Mammary epithelial cell (primary cell): ENCODE measurements at regions of chr15 and their contacts with region 1.

Region 1: DNA sequence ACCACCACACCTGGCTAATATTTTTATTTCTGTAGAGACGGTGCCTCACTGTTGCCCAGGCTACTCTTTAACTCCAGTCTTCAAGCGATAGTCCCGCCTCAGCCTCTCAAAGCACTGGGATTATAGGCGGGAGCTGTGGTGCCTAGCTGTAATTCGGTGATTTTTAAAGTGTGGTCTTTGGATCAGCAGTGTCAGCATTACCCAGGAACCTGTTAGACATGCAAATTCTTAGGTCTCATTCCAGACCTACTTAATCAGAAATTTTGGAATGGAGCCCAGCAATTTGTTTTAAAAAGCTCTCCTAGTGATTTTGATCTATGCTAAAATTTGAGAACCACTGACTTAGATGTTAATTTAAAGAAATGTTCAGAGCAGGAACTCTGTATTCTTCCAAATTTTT is 51.9 kb downstream of the GOLM2 start:
- DNase-seq: peak; percentile 86
- H3K4me3 ChIP-seq: no peak overlapping the region
- H3K27ac ChIP-seq: no peak overlapping the region
- H3K4me1 ChIP-seq: peaks cover 7% of the 10 kb centered on the region
- H3K27me3 ChIP-seq: no peaks in the 10 kb centered on the region
- CTCF ChIP-seq: no peak

Region 2: DNA sequence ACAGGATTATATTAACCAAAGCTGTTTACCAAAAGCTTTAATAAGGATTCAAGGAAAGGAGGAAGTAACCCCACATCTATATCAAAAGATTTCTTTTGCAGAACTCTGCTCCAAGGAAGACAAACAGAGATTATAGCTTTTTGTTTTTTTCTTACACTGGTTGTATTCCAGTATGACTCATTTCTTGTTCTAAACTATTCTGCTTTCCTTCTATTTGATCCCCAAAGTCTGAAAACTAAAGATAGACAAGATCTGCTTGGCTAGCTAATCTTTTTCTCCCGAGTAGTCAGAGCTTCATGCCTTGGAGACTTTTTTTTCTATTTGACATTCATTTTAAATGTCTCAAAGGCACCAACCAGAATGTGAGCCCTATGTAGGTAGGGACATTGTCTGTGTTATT is 108.6 kb before region 1 on chr15:
- CTCF ChIA-PET with region 1: no interaction called
- dilution Hi-C with region 1: no loop called
- in situ Hi-C with region 1: no loop called
- intact Hi-C with region 1: no loop called
- DNase-seq: no peak
- H3K4me3 ChIP-seq: no peak overlapping the region
- H3K27ac ChIP-seq: no peak overlapping the region
- H3K4me1 ChIP-seq: no peaks in the 10 kb centered on the region
- H3K27me3 ChIP-seq: no peaks in the 10 kb centered on the region
- CTCF ChIP-seq: no peak

Region 3: DNA sequence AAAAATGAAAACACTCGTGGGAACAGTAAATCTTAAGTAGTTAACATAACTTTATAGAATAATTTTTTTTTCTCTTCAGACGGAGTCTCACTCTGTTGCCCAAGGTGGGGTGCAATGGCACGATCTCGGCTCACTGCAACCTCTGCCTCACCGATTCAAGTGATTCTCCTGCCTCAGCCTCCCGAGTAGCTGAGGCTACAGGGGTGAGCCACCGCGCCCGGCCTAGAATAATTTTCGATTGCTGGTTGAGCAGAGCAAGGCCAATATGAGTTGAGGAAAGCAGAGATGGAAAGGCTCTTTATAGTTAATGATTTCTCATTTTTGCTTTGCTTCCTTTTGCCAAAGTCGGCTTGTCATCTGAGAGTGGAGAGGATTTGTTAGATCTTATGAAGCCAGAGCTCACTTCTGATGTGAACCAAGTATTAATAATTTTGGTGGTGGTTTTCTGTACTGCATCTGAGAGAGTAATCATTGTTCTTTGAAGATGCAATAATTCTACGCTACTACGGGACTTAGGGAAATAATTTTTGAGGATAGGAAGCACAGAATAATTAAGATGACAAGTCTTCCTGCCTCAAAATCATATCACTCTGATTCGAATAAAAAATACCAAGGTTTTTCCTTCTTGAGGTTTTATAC is 53.5 kb before region 1 on chr15:
- CTCF ChIA-PET with region 1: no interaction called
- dilution Hi-C with region 1: no loop called
- in situ Hi-C with region 1: no loop called
- intact Hi-C with region 1: loop called (anchors 5 kb)
- DNase-seq: peak; percentile 9
- H3K4me3 ChIP-seq: peak overlapping the region in 2 of 3 experiments; percentile 81 to 90
- H3K27ac ChIP-seq: peak overlapping the region; percentile 97
- H3K4me1 ChIP-seq: peaks cover 4% of the 10 kb centered on the region
- H3K27me3 ChIP-seq: no peaks in the 10 kb centered on the region
- CTCF ChIP-seq: peak; percentile 4 to 17

Region 4: GRCh38 chr15:44394062-44394461 is 53.7 kb after region 1 on chr15:
- CTCF ChIA-PET with region 1: no interaction called
- dilution Hi-C with region 1: no loop called
- in situ Hi-C with region 1: no loop called
- intact Hi-C with region 1: no loop called
- DNase-seq: no peak
- H3K4me3 ChIP-seq: no peak overlapping the region
- H3K27ac ChIP-seq: no peak overlapping the region
- H3K4me1 ChIP-seq: no peaks in the 10 kb centered on the region
- H3K27me3 ChIP-seq: no peaks in the 10 kb centered on the region
- CTCF ChIP-seq: no peak

Region 5: DNA sequence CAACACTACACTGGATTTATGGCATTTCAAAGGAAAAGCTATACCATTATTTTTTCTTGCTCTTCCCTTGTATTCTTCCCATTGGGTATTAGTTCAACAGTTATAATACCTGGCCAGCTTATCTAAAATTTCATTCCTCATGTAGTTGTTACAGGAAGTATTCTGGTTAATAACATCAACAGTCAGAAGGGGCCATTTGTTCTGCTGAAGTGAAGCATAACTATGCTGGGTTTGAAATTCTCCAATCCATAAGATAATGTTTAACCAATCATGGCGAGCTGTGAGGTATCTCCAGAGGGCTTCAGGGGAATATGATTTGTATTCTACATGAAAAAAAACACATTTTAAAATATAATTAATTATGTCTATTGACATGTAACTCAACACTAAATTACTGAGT is 279.7 kb after region 1 on chr15:
- CTCF ChIA-PET with region 1: no interaction called
- dilution Hi-C with region 1: no loop called
- in situ Hi-C with region 1: no loop called
- intact Hi-C with region 1: no loop called
- DNase-seq: no peak
- H3K4me3 ChIP-seq: no peak overlapping the region
- H3K27ac ChIP-seq: no peak overlapping the region
- H3K4me1 ChIP-seq: no peaks in the 10 kb centered on the region
- H3K27me3 ChIP-seq: no peaks in the 10 kb centered on the region
- CTCF ChIP-seq: no peak